ENCODE measurements at regions of chr3 and their contacts with region 1.

Region 1: GRCh38 chr3:15205934-15206661 is at the start of gene CAPN7:
- DNase-seq: peak; percentile 85
- ATAC-seq: peak; percentile 91
- H3K4me3 ChIP-seq: peak within 1 kb of the TSS; percentile 76 to 90 (median 87)
- H3K27ac ChIP-seq: peak within 1 kb of the TSS; percentile 94
- H3K4me1 ChIP-seq: peaks cover 51% of the 10 kb centered on the region
- H3K27me3 ChIP-seq: no peaks in the 10 kb centered on the region
- CTCF ChIP-seq: peak; percentile 70
- EP300 ChIP-seq: 0 out of 4 replicates have a peak, but pooled peaks of 1 of the 2 experiments have one; percentile 23
- POLR2A ChIP-seq: peak; percentile 83 to 91
- RAD21 ChIP-seq: peak; percentile 23
- total RNA-seq, gene CAPN7: 36.8 and 52.2 TPM in 2 replicates

Region 2: GRCh38 chr3:15108082-15108545 is 98.0 kb before region 1 on chr3:
- CTCF ChIA-PET with region 1: no interaction called
- POLR2A ChIA-PET with region 1: interaction called, 13 read pairs
- in situ Hi-C with region 1: loop called (anchors 10 kb)
- intact Hi-C with region 1: no loop called
- DNase-seq: peak; percentile 64
- ATAC-seq: peak; percentile 94
- H3K4me3 ChIP-seq: peak overlapping the region; percentile 35 to 62 (median 52); a peak in 5 of 6 replicates
- H3K27ac ChIP-seq: peak overlapping the region; percentile 66
- H3K4me1 ChIP-seq: peaks cover 39% of the 10 kb centered on the region
- H3K27me3 ChIP-seq: peaks cover 0 to 2% of the 10 kb centered on the region in 2 experiments; a peak in 1 of 5 replicates
- CTCF ChIP-seq: peak; percentile 95
- EP300 ChIP-seq: no peak
- POLR2A ChIP-seq: no peak
- RAD21 ChIP-seq: peak; percentile 91

Region 3: GRCh38 chr3:15148614-15149013 is 57.5 kb before region 1 on chr3:
- CTCF ChIA-PET with region 1: no interaction called
- POLR2A ChIA-PET with region 1: interaction called, 3 read pairs
- in situ Hi-C with region 1: no loop called
- intact Hi-C with region 1: loop called (anchors 5 kb)
- DNase-seq: peak; percentile 69
- ATAC-seq: peak; percentile 100
- H3K4me3 ChIP-seq: peak overlapping the region in 1 of 3 experiments; percentile 51; a peak in 2 of 6 replicates
- H3K27ac ChIP-seq: no peak overlapping the region
- H3K4me1 ChIP-seq: peaks cover 9% of the 10 kb centered on the region
- H3K27me3 ChIP-seq: no peaks in the 10 kb centered on the region; a peak in 1 of 5 replicates
- CTCF ChIP-seq: peak; percentile 58
- EP300 ChIP-seq: no peak
- POLR2A ChIP-seq: no peak
- RAD21 ChIP-seq: no peak

Region 4: GRCh38 chr3:15221574-15222217 is 15.6 kb after region 1 on chr3:
- CTCF ChIA-PET with region 1: no interaction called
- POLR2A ChIA-PET with region 1: interaction called, 12 read pairs
- in situ Hi-C with region 1: no loop called
- intact Hi-C with region 1: no loop called
- DNase-seq: no peak
- ATAC-seq: no peak
- H3K4me3 ChIP-seq: no peak overlapping the region
- H3K27ac ChIP-seq: no peak overlapping the region
- H3K4me1 ChIP-seq: peaks cover 23% of the 10 kb centered on the region
- H3K27me3 ChIP-seq: no peaks in the 10 kb centered on the region
- CTCF ChIP-seq: no peak
- EP300 ChIP-seq: no peak
- POLR2A ChIP-seq: no peak
- RAD21 ChIP-seq: no peak

Region 5: GRCh38 chr3:15377961-15378791 is 172.1 kb after region 1 on chr3:
- CTCF ChIA-PET with region 1: interaction called, 12 read pairs
- POLR2A ChIA-PET with region 1: no interaction called
- in situ Hi-C with region 1: no loop called
- intact Hi-C with region 1: loop called (anchors 1 kb)
- DNase-seq: peak; percentile 89
- ATAC-seq: peak; percentile 98
- H3K4me3 ChIP-seq: peak overlapping the region; percentile 42 to 59 (median 51); a peak in 5 of 6 replicates
- H3K27ac ChIP-seq: peak overlapping the region; percentile 25
- H3K4me1 ChIP-seq: peaks cover 5% of the 10 kb centered on the region; the same call in 1 of the 2 replicates
- H3K27me3 ChIP-seq: no peaks in the 10 kb centered on the region
- CTCF ChIP-seq: peak; percentile 94
- EP300 ChIP-seq: no peak; a peak in 1 of 4 replicates
- POLR2A ChIP-seq: no peak
- RAD21 ChIP-seq: peak; percentile 78

Region 6: GRCh38 chr3:15557511-15557946 is 351.4 kb after region 1 on chr3:
- CTCF ChIA-PET with region 1: no interaction called
- POLR2A ChIA-PET with region 1: interaction called, 3 read pairs
- in situ Hi-C with region 1: no loop called
- intact Hi-C with region 1: loop called (anchors 10 kb)
- DNase-seq: peak; percentile 75
- ATAC-seq: peak; percentile 86
- H3K4me3 ChIP-seq: no peak overlapping the region
- H3K27ac ChIP-seq: peak overlapping the region; percentile 32
- H3K4me1 ChIP-seq: peaks cover 27% of the 10 kb centered on the region
- H3K27me3 ChIP-seq: no peaks in the 10 kb centered on the region
- CTCF ChIP-seq: peak; percentile 67
- EP300 ChIP-seq: no peak
- POLR2A ChIP-seq: no peak
- RAD21 ChIP-seq: peak; percentile 37